Activated CD4-positive, alpha-beta T cell treated with anti-CD3 and anti-CD28 coated beads, Interleukin-2, amount 10 ng/mL, durations not matched to agents 24 days and 14 days (primary cell): ENCODE measurements at regions of chr2 and their contacts with region 1.

Region 1: DNA sequence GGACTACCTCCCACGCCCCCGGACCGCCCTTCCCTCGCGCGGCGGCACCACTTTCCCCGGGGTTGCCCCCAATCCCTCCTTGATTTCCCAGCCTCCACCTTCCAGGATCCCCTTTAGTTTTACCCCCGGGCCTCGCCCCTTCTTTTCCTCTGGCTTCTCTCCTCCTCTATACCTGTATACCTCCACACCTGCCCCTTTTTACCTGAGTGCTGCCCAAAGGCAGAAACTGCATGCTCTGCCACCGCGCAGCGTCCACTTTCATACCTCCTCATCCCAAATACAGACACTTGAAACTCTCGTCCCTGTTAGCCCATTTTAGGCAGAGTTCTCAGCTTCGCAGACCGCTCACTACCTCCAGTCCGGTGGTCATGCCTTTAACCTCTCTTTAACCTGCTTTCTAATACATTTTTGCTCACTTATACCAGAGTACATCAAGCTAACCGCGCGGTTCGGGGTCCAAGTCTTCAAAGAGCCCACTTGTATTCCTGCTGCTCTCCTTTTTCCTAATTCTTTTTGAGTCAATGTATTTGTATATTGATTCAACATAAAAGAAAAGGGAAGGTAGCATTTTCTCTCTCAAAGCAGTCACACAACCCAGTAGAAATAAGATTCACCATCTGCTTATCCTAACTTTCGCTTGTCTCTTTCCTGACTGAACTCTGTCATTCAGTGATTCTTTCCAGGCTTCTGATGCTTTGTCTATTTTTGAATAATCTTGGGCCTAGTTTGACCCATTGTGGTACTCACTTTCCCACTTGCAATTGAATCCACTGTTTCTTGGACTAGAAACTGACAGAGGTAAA is 915 bp downstream of the SPOPL start:
- DNase-seq: no peak
- H3K4me3 Mint-ChIP-seq: peak overlapping the region; percentile 97
- H3K27ac Mint-ChIP-seq: peak overlapping the region; percentile 96
- H3K4me1 Mint-ChIP-seq: peaks cover 32% of the 10 kb centered on the region
- H3K27me3 Mint-ChIP-seq: peaks cover 4% of the 10 kb centered on the region

Region 2: GRCh38 chr2:138430181-138430580 is 72.3 kb before region 1 on chr2:
- intact Hi-C with region 1: loop called (anchors 1 kb)
- DNase-seq: no peak
- H3K4me3 Mint-ChIP-seq: no peak overlapping the region
- H3K27ac Mint-ChIP-seq: no peak overlapping the region
- H3K4me1 Mint-ChIP-seq: peaks cover 4% of the 10 kb centered on the region
- H3K27me3 Mint-ChIP-seq: no peaks in the 10 kb centered on the region

Region 3: GRCh38 chr2:138516030-138516704 is 13.7 kb after region 1 on chr2:
- intact Hi-C with region 1: loop called (anchors 1 kb)
- DNase-seq: no peak
- H3K4me3 Mint-ChIP-seq: no peak overlapping the region
- H3K27ac Mint-ChIP-seq: no peak overlapping the region
- H3K4me1 Mint-ChIP-seq: peaks cover 7% of the 10 kb centered on the region
- H3K27me3 Mint-ChIP-seq: peaks cover 14% of the 10 kb centered on the region

Region 4: GRCh38 chr2:140013545-140014203 is 1511.2 kb after region 1 on chr2:
- intact Hi-C with region 1: no loop called
- DNase-seq: no peak
- H3K4me3 Mint-ChIP-seq: no peak overlapping the region
- H3K27ac Mint-ChIP-seq: no peak overlapping the region
- H3K4me1 Mint-ChIP-seq: no peaks in the 10 kb centered on the region
- H3K27me3 Mint-ChIP-seq: no peaks in the 10 kb centered on the region